HCT116 (cell line): ENCODE measurements at regions of chr17 and their contacts with region 1.

Region 1: DNA sequence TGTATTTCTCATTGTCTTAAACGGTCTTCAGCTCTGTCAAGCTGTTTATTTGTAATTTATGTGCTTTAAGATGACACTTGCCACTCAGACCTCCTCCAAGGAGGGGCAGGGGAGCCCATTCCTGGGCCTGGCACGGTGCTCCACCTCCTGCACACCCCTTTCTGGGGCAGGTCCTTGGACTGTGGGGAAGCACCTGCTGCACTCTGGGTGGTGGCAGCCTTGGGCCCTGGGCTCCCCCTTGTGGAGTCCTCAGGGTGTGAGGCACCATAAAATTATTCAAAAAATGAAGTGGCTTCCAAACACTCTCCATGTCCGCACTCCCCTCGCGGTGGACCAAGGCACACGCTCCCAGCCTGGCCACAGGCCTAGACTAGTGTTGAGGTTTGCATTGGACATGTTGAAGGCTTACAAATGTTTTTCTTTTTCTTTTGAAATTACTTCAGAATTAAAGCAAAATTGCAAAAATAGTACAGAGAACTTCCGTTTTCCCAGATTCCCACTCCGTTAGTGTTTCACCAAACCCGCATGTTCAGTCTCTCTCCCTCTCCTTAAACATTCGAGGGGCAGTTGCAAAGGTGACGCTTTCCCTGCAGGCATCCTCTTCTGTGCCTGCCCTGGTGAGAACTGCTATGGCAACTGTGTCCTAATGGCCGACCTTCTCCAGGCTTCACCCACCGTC is 32.4 kb downstream of the FOXK2 start:
- DNase-seq: peak; percentile 67
- ATAC-seq: peak; percentile 100
- H3K4me3 ChIP-seq: no peak overlapping the region
- H3K27ac ChIP-seq: no peak overlapping the region
- H3K4me1 ChIP-seq: peaks cover 10 to 30% of the 10 kb centered on the region in 2 experiments
- H3K27me3 ChIP-seq: no peaks in the 10 kb centered on the region
- CTCF ChIP-seq: peak; percentile 86 to 89 (median 87)
- POLR2A ChIP-seq: no peak
- RAD21 ChIP-seq: peak; percentile 94

Region 2: GRCh38 chr17:82351716-82352488 is 200.0 kb before region 1 on chr17:
- CTCF ChIA-PET with region 1: interaction called, 5 read pairs
- POLR2A ChIA-PET with region 1: no interaction called
- RAD21 ChIA-PET with region 1: no interaction called
- intact Hi-C with region 1: loop called (anchors 5 kb)
- DNase-seq: peak; percentile 91
- ATAC-seq: peak; percentile 92
- H3K4me3 ChIP-seq: no peak overlapping the region
- H3K27ac ChIP-seq: no peak overlapping the region
- H3K4me1 ChIP-seq: peaks cover 2 to 19% of the 10 kb centered on the region in 2 experiments; a peak in 3 of 4 replicates
- H3K27me3 ChIP-seq: no peaks in the 10 kb centered on the region
- CTCF ChIP-seq: peak; percentile 97 to 99 (median 98)
- POLR2A ChIP-seq: no peak
- RAD21 ChIP-seq: peak; percentile 100

Region 3: DNA sequence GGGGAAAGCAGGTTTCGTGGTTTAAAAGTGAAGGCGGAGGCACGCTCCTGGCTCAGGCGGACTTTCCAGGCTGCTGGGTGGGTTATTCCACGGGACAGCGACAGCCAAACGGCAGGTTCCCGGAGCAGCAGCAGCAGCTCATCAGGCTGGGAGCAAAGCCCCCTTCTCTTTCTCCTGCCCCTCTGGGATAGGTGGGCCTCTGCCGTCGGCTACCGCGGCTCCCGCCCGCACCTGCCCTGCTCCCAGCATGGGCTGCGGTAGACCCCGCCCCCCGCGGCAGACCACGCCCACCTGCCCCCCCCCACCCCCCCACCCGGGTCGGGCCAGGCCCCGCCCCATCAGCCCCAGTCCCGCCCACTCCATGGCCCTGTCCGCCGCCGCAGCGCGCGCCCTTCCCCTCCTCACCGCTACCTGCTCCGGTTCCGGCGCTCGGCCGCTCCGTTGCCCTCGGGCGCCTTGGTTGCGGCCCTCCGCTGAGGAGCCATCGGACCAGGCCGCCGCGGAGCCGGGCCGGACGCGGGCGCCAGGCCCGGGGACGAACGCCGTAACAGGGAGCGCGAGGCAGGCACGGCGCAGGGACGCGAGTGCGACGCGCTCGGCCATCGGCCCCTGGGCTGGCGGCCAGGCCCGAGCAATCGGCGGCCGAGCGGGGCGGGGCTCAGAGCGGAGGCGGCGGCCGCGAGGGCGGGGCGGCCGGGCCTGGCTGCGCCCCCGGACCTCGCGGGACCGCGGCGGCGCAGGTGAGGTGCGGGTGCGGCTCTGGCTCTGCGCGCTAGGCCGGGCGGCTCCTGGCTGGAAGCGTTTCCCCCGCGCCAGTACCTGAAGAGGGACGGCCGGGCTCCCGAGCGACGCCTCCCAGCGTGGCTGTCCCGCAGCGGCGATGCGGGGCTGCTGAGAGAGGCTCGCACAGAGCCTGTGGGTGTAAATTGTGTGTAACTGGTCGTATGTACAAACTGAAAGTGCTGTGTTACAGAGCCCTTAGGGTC is 133.6 kb before region 1 on chr17 and contains the starts of genes HEXD and OGFOD3:
- CTCF ChIA-PET with region 1: interaction called, 3 read pairs
- POLR2A ChIA-PET with region 1: no interaction called
- RAD21 ChIA-PET with region 1: no interaction called
- intact Hi-C with region 1: loop called (anchors 10 kb)
- DNase-seq: peak; percentile 68
- ATAC-seq: peak; percentile 87
- H3K4me3 ChIP-seq: peak within 1 kb of the TSS; percentile 65 to 81
- H3K27ac ChIP-seq: peak within 1 kb of the TSS; percentile 98
- H3K4me1 ChIP-seq: peaks cover 7 to 23% of the 10 kb centered on the region in 2 experiments
- H3K27me3 ChIP-seq: no peaks in the 10 kb centered on the region
- CTCF ChIP-seq: no peak
- POLR2A ChIP-seq: peak; percentile 90
- RAD21 ChIP-seq: no peak
- total RNA-seq, gene HEXD: 45.2 TPM
- total RNA-seq, gene OGFOD3: 53.6 TPM

Region 4: DNA sequence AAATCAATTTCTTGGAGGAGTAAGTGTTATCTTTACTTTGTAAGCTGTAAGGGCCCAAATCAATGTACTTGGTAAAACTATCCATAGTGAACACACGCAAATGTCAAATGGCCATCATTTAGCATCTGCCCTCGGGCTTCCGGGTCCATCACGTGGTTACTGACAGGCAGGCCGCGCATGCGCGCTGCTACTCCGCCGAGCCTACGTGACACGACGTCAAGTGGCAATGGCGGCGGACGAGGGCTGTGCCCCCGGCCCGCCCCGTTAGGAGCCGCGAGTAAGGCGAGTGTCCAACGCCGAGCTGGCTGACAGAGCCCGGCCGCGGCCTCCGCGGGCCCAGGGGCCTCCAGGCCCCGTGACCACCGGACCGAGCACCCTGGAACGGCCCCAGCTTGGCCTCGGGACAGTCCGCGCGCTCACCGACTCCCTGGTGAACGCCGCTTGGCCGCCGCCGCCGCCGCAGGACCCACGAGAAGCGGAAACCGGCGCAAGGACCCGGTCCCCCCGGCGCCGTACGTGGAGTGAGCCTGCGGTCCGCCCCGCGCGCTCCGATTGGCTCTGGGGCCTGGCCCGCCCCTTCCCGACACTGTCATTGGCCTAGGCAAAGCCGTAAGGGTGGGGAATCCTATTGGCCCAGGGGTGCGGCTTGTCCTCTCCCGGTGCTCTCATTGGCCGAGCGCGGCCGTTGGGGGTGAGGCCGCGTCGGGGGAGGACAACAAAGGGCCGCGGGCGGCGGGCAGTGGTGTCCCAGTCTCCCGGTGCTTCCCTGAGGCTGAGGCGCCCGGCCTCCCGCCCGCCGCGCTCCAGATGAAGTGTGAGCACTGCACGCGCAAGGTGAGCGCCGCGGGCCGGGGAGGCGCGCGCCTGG is 93.7 kb before region 1 on chr17 and contains the start of gene NARF:
- CTCF ChIA-PET with region 1: no interaction called
- POLR2A ChIA-PET with region 1: no interaction called
- RAD21 ChIA-PET with region 1: no interaction called
- intact Hi-C with region 1: loop called (anchors 1 kb)
- DNase-seq: peak; percentile 98
- ATAC-seq: peak; percentile 98
- H3K4me3 ChIP-seq: peak within 1 kb of the TSS; percentile 76 to 96
- H3K27ac ChIP-seq: peak within 1 kb of the TSS; percentile 99
- H3K4me1 ChIP-seq: peaks cover 8 to 19% of the 10 kb centered on the region in 2 experiments; a peak in 3 of 4 replicates
- H3K27me3 ChIP-seq: no peaks in the 10 kb centered on the region
- CTCF ChIP-seq: no peak
- POLR2A ChIP-seq: peak; percentile 58
- RAD21 ChIP-seq: no peak
- total RNA-seq, gene NARF: 91.8 TPM

Region 5: GRCh38 chr17:82494236-82495055 is 57.5 kb before region 1 on chr17:
- CTCF ChIA-PET with region 1: interaction called, 3 read pairs
- POLR2A ChIA-PET with region 1: no interaction called
- RAD21 ChIA-PET with region 1: no interaction called
- intact Hi-C with region 1: loop called (anchors 1 kb)
- DNase-seq: peak; percentile 97
- ATAC-seq: peak; percentile 87
- H3K4me3 ChIP-seq: peak overlapping the region in 1 of 2 experiments; percentile 9; a peak in 1 of 4 replicates
- H3K27ac ChIP-seq: peak overlapping the region; percentile 76
- H3K4me1 ChIP-seq: peaks cover 39 to 53% of the 10 kb centered on the region in 2 experiments
- H3K27me3 ChIP-seq: no peaks in the 10 kb centered on the region
- CTCF ChIP-seq: peak; percentile 88 to 97 (median 97)
- POLR2A ChIP-seq: peak; percentile 39
- RAD21 ChIP-seq: no peak

Region 6: DNA sequence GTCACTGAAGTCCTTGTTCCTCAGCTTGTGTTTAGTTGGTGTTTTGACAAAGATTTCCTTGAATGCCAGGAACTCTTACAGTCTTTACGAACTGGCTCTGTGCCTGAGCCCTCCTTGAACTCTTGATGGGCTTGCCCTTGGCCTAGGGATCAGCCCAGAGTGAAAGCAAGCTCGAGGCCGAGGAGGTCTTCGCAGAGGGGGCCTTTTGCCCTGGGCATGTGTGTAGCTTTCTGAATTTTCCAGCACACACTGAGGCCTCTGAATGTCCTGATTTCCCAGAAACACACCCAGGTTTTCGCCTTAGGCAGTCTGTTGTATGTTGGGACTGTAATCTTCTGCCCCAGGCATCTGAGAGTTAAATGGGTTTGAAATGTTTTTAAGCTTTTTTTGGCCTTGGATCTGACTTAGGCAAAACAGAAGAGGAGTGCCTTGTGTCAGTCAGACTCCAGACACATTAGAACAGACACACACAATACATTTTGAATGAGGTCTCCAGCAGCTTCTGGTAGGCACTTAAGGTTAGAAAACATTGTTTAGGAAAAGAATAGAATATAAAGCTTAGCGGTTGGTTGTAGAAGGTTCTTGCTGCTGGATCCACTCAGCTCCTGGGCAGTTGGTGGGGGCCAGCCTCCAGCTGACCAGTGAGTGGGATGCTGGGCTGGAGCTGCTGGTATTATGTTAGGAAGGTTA is 15.3 kb before region 1 on chr17:
- CTCF ChIA-PET with region 1: interaction called, 15 read pairs
- POLR2A ChIA-PET with region 1: no interaction called
- RAD21 ChIA-PET with region 1: no interaction called
- intact Hi-C with region 1: no loop called
- DNase-seq: no peak
- ATAC-seq: no peak; the same call in 1 of the 2 replicates
- H3K4me3 ChIP-seq: no peak overlapping the region
- H3K27ac ChIP-seq: peak overlapping the region; percentile 47
- H3K4me1 ChIP-seq: peaks cover 43 to 58% of the 10 kb centered on the region in 2 experiments
- H3K27me3 ChIP-seq: no peaks in the 10 kb centered on the region
- CTCF ChIP-seq: no peak
- POLR2A ChIP-seq: no peak
- RAD21 ChIP-seq: no peak

Region 7: DNA sequence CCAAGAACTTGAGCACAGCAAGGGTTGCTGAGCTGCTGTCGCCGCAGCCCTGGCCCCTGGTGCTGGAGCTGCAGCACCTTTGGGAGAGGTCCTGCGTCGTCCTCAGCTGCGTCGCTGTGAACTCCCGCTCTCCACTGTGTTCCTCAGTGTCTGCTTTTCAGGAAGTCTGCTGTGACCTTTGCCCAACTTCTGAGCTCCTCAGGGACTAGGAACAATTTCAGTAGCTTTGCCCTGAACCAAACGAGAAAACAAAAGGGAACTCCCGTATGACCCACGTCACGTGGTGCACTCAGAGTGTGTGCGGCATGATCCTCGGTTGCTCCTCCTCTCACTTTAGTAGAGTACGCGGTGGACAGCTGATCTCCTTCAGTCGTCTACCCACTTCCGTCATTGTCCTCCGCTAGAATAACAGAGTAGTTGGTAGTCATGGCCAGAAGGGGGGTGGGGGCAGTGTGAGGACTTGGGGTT is 52.1 kb after region 1 on chr17:
- CTCF ChIA-PET with region 1: no interaction called
- POLR2A ChIA-PET with region 1: no interaction called
- RAD21 ChIA-PET with region 1: no interaction called
- intact Hi-C with region 1: no loop called
- DNase-seq: no peak
- ATAC-seq: no peak
- H3K4me3 ChIP-seq: no peak overlapping the region
- H3K27ac ChIP-seq: no peak overlapping the region
- H3K4me1 ChIP-seq: no peaks in the 10 kb centered on the region
- H3K27me3 ChIP-seq: no peaks in the 10 kb centered on the region
- CTCF ChIP-seq: no peak
- POLR2A ChIP-seq: no peak
- RAD21 ChIP-seq: no peak